Sciatic nerve (tissue), 2 donors: ENCODE measurements at regions of chr5 and their contacts with region 1.

Region 1: GRCh38 chr5:79168031-79168430 is 56.4 kb downstream of the BHMT start:
- DNase-seq: no peak
- ATAC-seq: no peak

Region 2: GRCh38 chr5:79109527-79110492 is 58.2 kb before region 1 on chr5:
- intact Hi-C with region 1: loop called (anchors 2 kb)
- DNase-seq: no peak
- ATAC-seq: no peak

Region 3: GRCh38 chr5:80697100-80697499 is 1529.1 kb after region 1 on chr5:
- intact Hi-C with region 1: no loop called
- DNase-seq: no peak
- ATAC-seq: no peak